ENCODE measurements at regions of chr5 and their contacts with region 1.

Region 1: DNA sequence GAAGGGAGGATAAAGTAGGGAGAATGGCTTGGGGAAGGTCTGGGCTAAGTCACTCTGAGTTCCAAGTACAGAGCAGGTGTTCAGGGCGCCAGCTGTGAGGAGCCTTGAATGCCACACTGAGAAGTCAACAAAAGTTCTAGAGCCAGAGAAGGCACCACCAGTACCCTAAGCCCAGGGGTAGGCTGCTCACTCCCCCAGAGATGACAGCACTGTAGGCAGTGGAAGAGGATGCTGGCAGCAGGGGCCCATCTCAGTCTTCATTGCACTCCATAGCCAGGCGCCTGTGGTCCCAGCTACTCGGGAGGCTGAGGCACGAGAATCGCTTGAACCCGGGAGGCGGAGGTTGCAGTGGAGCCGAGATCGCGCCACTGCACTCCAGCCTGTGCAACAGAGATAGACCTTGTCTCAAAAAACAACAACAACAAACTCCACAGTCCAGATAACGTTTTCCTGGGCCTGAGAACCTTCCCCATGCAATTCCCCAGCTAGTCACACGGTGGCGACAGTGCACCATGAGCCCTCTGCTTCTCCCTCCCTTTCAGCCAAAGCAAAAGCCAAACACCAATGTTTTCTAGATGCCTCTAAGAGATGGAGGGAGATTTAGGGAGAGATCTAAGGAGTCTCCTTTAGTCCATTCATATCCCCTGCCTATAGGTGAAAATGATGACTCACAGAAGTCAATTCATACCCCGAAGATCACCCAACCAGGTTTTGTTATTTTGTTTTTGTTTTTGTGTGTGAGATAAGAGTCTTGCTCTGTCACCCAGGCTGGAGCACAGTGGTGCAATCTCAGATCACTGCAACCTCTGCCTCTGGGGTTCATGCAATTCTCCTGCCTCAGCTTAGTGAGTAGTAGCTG is 19.8 kb upstream of the NSD1 start:
- DNase-seq: peak; percentile 63
- ATAC-seq: peak; percentile 85
- H3K4me3 ChIP-seq: no peak overlapping the region
- H3K27ac ChIP-seq: no peak overlapping the region
- H3K4me1 ChIP-seq: no peaks in the 10 kb centered on the region; the same call in 1 of the 2 replicates
- H3K27me3 ChIP-seq: no peaks in the 10 kb centered on the region; the same call in 1 of the 2 replicates
- CTCF ChIP-seq: peak; percentile 98
- POLR2A ChIP-seq: peak; percentile 49; the same call in 1 of the 2 replicates
- RAD21 ChIP-seq: peak; percentile 100

Region 2: GRCh38 chr5:176660860-176661641 is 452.7 kb before region 1 on chr5:
- CTCF ChIA-PET with region 1: interaction called, 5 read pairs
- POLR2A ChIA-PET with region 1: no interaction called
- dilution Hi-C with region 1: no loop called
- in situ Hi-C with region 1: no loop called
- intact Hi-C with region 1: loop called (anchors 1 kb)
- DNase-seq: peak; percentile 62
- ATAC-seq: peak; percentile 89
- H3K4me3 ChIP-seq: no peak overlapping the region
- H3K27ac ChIP-seq: no peak overlapping the region
- H3K4me1 ChIP-seq: no peaks in the 10 kb centered on the region
- H3K27me3 ChIP-seq: peaks cover 20% of the 10 kb centered on the region
- CTCF ChIP-seq: peak; percentile 95
- POLR2A ChIP-seq: no peak
- RAD21 ChIP-seq: peak; percentile 89

Region 3: DNA sequence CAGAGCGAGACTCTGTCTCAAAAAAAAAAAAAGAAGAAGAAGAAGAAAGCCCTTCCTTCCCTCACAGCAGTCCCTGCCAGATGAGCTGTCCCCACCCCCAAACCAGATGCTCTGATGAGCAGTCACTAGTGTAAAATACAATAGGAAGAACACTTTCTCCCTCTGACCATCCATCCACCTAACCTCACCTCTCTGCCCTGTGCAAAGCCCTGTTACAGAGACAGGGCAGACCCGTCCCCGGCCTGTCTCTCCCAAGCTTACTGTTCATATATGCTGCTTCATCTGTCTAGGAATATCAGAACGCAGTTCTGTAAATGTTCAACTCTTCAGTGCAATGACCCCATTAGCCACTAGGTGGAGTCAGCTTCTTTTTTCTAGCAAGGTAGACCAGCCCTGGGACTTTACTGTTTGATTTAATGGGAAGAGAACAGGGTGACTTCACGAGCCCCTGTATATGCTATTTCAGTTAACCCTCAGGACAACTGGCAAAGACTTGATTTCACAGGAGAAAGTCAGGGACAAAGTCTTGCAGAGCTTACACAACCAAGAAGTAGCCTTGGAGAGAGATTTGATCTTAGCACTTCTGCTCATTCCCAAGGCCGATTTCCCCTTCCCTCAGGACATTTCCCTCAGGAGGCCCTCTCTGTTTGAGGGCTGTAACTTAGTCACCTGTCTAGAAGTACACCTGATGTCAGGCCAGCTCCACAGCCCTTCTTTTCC is 42.0 kb before region 1 on chr5:
- CTCF ChIA-PET with region 1: interaction called, 43 read pairs
- POLR2A ChIA-PET with region 1: no interaction called
- dilution Hi-C with region 1: no loop called
- in situ Hi-C with region 1: loop called (anchors 5 kb)
- intact Hi-C with region 1: loop called (anchors 1 kb)
- DNase-seq: peak; percentile 81
- ATAC-seq: peak; percentile 97
- H3K4me3 ChIP-seq: no peak overlapping the region
- H3K27ac ChIP-seq: no peak overlapping the region
- H3K4me1 ChIP-seq: peaks cover 5% of the 10 kb centered on the region; the same call in 1 of the 2 replicates
- H3K27me3 ChIP-seq: no peaks in the 10 kb centered on the region
- CTCF ChIP-seq: peak; percentile 83
- POLR2A ChIP-seq: no peak
- RAD21 ChIP-seq: peak; percentile 59

Region 4: DNA sequence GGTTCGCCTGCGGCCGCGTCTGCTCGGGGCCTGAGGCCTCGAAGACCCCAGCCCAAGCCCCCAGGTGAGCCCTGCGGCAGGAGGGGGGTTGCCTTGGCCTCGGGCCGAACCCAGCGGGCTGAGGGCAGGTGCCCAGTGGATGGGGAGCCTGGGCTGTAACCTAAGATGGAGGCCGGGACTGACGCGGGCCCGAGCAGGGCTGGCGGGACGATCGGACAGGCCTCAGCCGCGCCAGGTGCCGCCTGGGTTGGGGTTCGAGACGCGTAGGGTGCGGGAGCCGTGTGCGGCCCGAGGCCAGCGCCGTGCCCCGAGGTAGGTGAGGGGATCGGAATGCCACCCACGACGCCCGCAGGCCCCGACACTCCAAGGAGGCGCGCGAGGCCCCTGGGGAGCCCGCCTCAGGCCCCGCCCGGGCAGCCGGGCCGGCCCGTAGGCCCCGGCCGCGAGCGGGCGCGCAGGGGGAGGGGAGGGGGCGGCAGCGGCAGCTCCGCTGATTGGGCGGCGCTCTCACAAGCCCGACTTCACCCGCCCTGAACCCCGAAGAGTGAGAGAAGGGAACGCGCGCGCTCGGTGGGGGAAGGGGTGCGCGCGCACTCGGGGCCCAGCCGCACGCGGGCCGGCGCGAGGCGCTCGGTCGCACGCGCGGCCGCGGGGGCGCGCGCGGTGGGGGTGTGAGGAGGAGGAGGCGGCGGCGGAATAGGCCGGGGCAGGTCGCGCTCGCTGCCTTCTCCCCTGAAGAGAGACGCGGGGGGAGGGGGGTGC is 19.5 kb after region 1 on chr5 and contains the start of gene NSD1:
- CTCF ChIA-PET with region 1: interaction called, 4 read pairs
- POLR2A ChIA-PET with region 1: no interaction called
- dilution Hi-C with region 1: no loop called
- in situ Hi-C with region 1: no loop called
- intact Hi-C with region 1: loop called (anchors 2 kb)
- DNase-seq: peak; percentile 66
- ATAC-seq: peak; percentile 72
- H3K4me3 ChIP-seq: peak within 1 kb of the TSS; percentile 68
- H3K27ac ChIP-seq: peak within 1 kb of the TSS; percentile 80
- H3K4me1 ChIP-seq: peaks cover 20% of the 10 kb centered on the region
- H3K27me3 ChIP-seq: no peaks in the 10 kb centered on the region
- CTCF ChIP-seq: no peak
- POLR2A ChIP-seq: no peak
- RAD21 ChIP-seq: no peak
- total RNA-seq, gene NSD1: 31.0 and 34.2 TPM in 2 replicates

Region 5: GRCh38 chr5:177276886-177277285 is 163.1 kb after region 1 on chr5:
- CTCF ChIA-PET with region 1: no interaction called
- POLR2A ChIA-PET with region 1: no interaction called
- dilution Hi-C with region 1: no loop called
- in situ Hi-C with region 1: no loop called
- intact Hi-C with region 1: loop called (anchors 10 kb)
- DNase-seq: peak; percentile 12
- ATAC-seq: no peak
- H3K4me3 ChIP-seq: no peak overlapping the region
- H3K27ac ChIP-seq: no peak overlapping the region
- H3K4me1 ChIP-seq: peaks cover 2% of the 10 kb centered on the region
- H3K27me3 ChIP-seq: no peaks in the 10 kb centered on the region
- CTCF ChIP-seq: no peak
- POLR2A ChIP-seq: no peak
- RAD21 ChIP-seq: no peak

Region 6: GRCh38 chr5:177300236-177300880 is 186.6 kb after region 1 on chr5:
- CTCF ChIA-PET with region 1: interaction called, 3 read pairs
- POLR2A ChIA-PET with region 1: interaction called, 5 read pairs
- dilution Hi-C with region 1: no loop called
- in situ Hi-C with region 1: no loop called
- intact Hi-C with region 1: loop called (anchors 1 kb)
- DNase-seq: peak; percentile 80
- ATAC-seq: peak; percentile 58
- H3K4me3 ChIP-seq: no peak overlapping the region
- H3K27ac ChIP-seq: peak overlapping the region; percentile 28; the same call in 1 of the 2 replicates
- H3K4me1 ChIP-seq: peaks cover 12% of the 10 kb centered on the region
- H3K27me3 ChIP-seq: no peaks in the 10 kb centered on the region
- CTCF ChIP-seq: 0 out of 2 replicates have a peak, but pooled peaks have one; percentile 28
- POLR2A ChIP-seq: no peak
- RAD21 ChIP-seq: peak; percentile 29; the same call in 1 of the 2 replicates

Region 7: GRCh38 chr5:177454397-177455035 is 340.7 kb after region 1 on chr5:
- CTCF ChIA-PET with region 1: no interaction called
- POLR2A ChIA-PET with region 1: no interaction called
- dilution Hi-C with region 1: no loop called
- in situ Hi-C with region 1: no loop called
- intact Hi-C with region 1: loop called (anchors 1 kb)
- DNase-seq: peak; percentile 80
- ATAC-seq: peak; percentile 58
- H3K4me3 ChIP-seq: peak overlapping the region; percentile 38
- H3K27ac ChIP-seq: no peak overlapping the region; the same call in 1 of the 2 replicates
- H3K4me1 ChIP-seq: peaks cover 8% of the 10 kb centered on the region
- H3K27me3 ChIP-seq: no peaks in the 10 kb centered on the region
- CTCF ChIP-seq: peak; percentile 99
- POLR2A ChIP-seq: 0 out of 2 replicates have a peak, but pooled peaks have one; percentile 24
- RAD21 ChIP-seq: peak; percentile 88

Measured in IMR-90 (cell line).